Transverse colon (tissue), 4 donors: ENCODE measurements at regions of chr18 and their contacts with region 1.

Region 1: DNA sequence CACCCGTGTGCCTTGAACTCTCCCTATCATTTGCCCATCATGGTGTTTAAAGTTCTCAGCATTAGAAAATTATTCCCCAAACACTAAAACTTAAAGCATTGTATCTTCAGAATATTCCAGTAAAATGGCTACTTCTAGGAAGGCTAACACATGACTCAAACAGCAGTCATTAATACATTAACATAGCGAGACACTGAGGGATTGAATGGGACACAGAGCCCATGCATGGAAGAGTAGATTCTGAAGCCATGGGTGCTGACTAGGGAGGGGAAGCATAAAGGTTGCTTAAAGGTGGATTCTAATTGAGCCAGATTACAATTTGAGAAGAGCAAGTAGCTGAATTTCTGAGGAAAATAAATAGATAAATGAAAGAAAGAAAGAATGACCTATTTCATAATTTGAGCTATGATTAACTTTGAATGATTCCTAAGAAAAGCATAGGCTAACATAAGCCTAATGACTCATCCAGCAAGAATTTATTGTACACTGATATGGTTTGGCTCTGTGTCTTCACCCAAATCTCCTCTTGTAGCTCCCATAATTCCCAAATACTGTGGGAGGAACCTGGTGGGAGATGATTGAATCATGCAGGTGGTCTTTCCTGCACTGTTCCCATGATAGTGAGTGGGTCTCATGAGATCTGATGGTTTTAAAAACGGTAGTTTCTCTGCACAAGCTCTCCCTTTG is 79.8 kb upstream of the PIK3C3 start:
- DNase-seq: no peak
- H3K4me3 ChIP-seq: no peak overlapping the region
- H3K27ac ChIP-seq: no peak overlapping the region
- H3K4me1 ChIP-seq: no peaks in the 10 kb centered on the region
- H3K27me3 ChIP-seq: no peaks in the 10 kb centered on the region
- CTCF ChIP-seq: no peak
- EP300 ChIP-seq: no peak
- POLR2A ChIP-seq: no peak

Region 2: DNA sequence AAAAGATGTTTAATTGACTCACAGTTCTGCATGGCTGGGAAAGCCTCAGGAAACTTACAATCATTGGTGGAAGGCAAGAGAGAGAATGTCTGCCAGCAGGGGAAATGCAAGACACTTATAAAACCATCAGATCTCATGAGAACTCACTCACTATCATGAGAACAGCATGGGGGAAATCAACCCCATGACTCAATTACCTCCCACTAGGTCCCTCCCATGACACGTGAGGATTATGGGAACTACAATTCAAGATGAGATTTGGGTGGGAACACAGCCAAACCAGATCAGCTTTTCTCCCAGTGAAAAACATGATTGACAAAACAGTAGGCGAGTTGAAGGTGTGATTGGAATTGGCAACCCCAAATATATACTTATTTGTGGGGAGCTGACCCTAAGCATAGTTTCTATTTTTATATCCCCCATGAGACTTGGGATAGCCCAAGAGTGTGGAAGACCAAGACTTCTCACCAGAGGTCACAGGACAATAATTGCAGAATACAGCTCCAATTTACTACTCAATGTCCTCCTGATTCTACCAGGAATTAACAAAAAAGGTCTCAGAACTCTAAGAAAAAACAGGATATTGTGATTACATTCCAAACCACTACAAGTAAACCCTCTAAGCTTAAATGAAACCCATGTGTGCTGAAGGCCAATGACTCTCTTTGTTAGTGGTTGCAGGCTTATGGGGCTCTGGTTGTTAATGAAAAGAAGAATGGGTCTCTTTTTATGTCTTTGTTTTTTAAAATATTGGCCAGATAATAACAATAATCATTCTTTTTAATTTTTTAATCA is 16.3 kb before region 1 on chr18:
- in situ Hi-C with region 1: no loop called
- intact Hi-C with region 1: loop called (anchors 1 kb)
- DNase-seq: no peak
- H3K4me3 ChIP-seq: no peak overlapping the region
- H3K27ac ChIP-seq: no peak overlapping the region
- H3K4me1 ChIP-seq: no peaks in the 10 kb centered on the region
- H3K27me3 ChIP-seq: no peaks in the 10 kb centered on the region
- CTCF ChIP-seq: no peak
- EP300 ChIP-seq: no peak
- POLR2A ChIP-seq: no peak

Region 3: DNA sequence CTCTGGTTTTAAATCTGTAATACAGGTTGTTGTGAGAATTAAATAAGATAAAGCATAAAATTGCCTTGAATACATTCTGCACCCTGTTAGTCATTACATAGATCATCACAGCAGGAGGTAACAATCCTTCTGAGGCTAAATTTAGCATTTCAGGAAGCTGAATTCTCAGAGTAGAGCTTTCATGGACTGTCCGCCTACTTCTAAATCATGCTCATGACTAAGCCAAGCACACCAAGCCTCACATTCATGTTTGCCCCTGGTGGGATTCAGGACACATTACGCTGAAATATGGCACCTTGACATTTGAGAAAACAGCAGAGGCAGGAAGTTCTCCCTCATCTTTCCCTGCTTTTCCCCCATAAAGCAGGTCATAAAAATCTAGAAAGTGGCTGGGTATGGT is 63.2 kb after region 1 on chr18:
- in situ Hi-C with region 1: loop called in 1 of 4 experiments (anchors 10 kb)
- intact Hi-C with region 1: no loop called
- DNase-seq: no peak
- H3K4me3 ChIP-seq: no peak overlapping the region
- H3K27ac ChIP-seq: no peak overlapping the region
- H3K4me1 ChIP-seq: no peaks in the 10 kb centered on the region
- H3K27me3 ChIP-seq: no peaks in the 10 kb centered on the region
- CTCF ChIP-seq: no peak
- EP300 ChIP-seq: no peak
- POLR2A ChIP-seq: no peak

Region 4: GRCh38 chr18:43772907-43773306 is 1897.7 kb after region 1 on chr18:
- in situ Hi-C with region 1: no loop called
- intact Hi-C with region 1: no loop called
- DNase-seq: no peak
- H3K4me3 ChIP-seq: no peak overlapping the region
- H3K27ac ChIP-seq: no peak overlapping the region
- H3K4me1 ChIP-seq: no peaks in the 10 kb centered on the region
- H3K27me3 ChIP-seq: no peaks in the 10 kb centered on the region
- CTCF ChIP-seq: no peak
- EP300 ChIP-seq: no peak
- POLR2A ChIP-seq: no peak